Pancreas (tissue), 10 donors: ENCODE measurements at regions of chr6 and their contacts with region 1.

Region 1: DNA sequence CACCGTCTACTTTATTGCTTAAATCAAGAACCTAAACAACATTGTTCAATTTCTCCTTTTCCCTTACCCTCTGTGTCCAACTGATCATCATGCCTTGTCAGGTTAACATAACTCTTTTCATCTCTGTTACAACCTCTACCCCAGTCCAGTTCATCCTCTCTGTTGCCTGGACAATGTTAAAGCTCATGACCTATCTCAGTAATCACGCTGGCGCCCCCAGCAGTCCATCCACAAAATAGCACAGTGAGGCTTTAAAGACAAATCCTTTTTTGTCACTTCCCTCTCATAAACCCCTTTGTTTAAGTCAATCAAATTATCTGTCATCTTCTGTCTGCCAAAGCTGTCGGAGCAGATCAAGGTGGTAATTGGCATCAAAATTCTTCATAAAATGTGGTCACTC is 140.1 kb downstream of the QKI start:
- DNase-seq: peak in 5 of 6 donors; percentile 14 to 67 (median 42)
- ATAC-seq: peak; percentile 72 to 93 (median 78)
- H3K4me3 ChIP-seq: no peak overlapping the region
- H3K27ac ChIP-seq: no peak overlapping the region
- H3K4me1 ChIP-seq: no peaks in the 10 kb centered on the region
- H3K27me3 ChIP-seq: no peaks in the 10 kb centered on the region
- CTCF ChIP-seq: peak in 3 of 4 donors; percentile 17 to 30 (median 24)

Region 2: DNA sequence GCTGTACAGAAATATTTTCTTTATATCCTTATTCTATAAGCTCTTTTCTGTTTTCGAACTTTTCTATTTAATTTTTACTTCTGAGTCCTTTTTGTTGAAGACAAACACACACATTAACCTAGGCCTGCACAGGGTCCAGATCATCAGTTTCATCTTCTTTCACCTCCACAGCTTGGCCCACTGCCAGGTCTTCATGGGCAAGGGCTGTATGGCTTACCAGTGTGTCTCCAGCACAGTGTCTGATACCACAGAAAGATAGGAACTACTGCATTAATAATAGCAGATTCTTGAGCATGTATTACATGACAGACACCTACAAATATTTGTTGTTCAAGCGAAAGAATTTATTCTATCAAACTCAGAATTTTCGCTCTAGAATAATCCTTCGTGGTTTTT is 115.7 kb before region 1 on chr6:
- intact Hi-C with region 1: loop called in 1 of 3 experiments (anchors 10 kb)
- DNase-seq: peak in 4 of 6 donors; percentile 19 to 74 (median 55)
- ATAC-seq: peak in 2 of 4 donors; percentile 36 to 48
- H3K4me3 ChIP-seq: no peak overlapping the region
- H3K27ac ChIP-seq: no peak overlapping the region
- H3K4me1 ChIP-seq: peaks cover 13 to 33% (median 24%) of the 10 kb centered on the region in 3 donors
- H3K27me3 ChIP-seq: no peaks in the 10 kb centered on the region
- CTCF ChIP-seq: no peak